ENCODE measurements at regions of chr4 and their contacts with region 1.

Region 1: GRCh38 chr4:164136180-164136616 is 617.7 kb upstream of the SMIM31 start:
- DNase-seq: no peak
- ATAC-seq: no peak
- H3K4me3 ChIP-seq: no peak overlapping the region
- H3K27ac ChIP-seq: no peak overlapping the region
- H3K4me1 ChIP-seq: no peaks in the 10 kb centered on the region
- H3K27me3 ChIP-seq: no peaks in the 10 kb centered on the region
- CTCF ChIP-seq: no peak

Region 2: GRCh38 chr4:163988865-163989264 is 147.3 kb before region 1 on chr4:
- CTCF ChIA-PET with region 1: no interaction called
- POLR2A ChIA-PET with region 1: no interaction called
- intact Hi-C with region 1: no loop called
- DNase-seq: no peak
- ATAC-seq: no peak
- H3K4me3 ChIP-seq: no peak overlapping the region
- H3K27ac ChIP-seq: no peak overlapping the region
- H3K4me1 ChIP-seq: peaks cover 7% of the 10 kb centered on the region
- H3K27me3 ChIP-seq: no peaks in the 10 kb centered on the region
- CTCF ChIP-seq: no peak

Region 3: DNA sequence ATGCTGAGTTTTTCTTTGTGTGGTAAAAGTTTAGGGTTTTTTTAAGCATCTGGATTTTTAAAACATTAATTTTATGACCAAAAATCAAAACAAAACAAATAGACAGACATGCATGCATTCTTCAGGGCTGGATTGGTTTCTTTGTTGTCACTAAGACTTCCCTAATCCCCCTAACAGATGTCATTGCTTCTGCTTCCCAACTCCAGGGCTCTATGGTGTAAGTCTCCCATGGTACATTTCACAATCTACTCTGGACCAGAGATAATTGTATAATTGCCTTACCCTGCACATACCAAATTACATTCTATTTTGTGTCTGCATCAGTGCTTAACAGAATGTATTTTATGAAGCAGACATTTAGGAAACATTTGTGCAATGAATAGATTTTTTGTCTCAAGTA is 88.7 kb after region 1 on chr4:
- CTCF ChIA-PET with region 1: no interaction called
- POLR2A ChIA-PET with region 1: no interaction called
- intact Hi-C with region 1: no loop called
- DNase-seq: no peak
- ATAC-seq: no peak
- H3K4me3 ChIP-seq: no peak overlapping the region
- H3K27ac ChIP-seq: no peak overlapping the region
- H3K4me1 ChIP-seq: no peaks in the 10 kb centered on the region
- H3K27me3 ChIP-seq: no peaks in the 10 kb centered on the region
- CTCF ChIP-seq: no peak

Region 4: DNA sequence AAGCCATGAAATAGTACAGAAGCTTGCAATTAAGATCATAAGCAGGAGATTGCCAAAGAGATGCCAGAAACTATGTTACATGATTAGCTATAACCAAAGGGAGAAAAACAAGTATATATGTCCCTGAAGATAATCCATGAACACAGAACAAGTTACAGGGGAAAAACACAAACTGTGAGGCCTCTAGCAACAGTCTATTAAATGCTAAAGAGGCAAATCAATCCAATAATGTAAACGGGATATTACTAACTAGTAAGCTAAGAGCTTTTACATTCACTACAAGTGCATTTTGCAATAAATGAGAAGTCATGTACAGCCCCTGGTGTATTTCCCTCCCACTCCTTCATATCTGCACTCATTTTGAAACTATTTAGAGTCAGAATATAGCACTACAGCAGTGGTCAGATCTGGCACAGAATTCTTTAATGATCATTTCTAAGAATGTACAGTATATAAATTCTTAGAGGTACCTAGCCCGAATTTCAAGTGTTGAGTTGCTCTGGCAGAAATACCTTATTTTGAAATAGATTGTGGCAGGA is 168.0 kb after region 1 on chr4:
- CTCF ChIA-PET with region 1: no interaction called
- POLR2A ChIA-PET with region 1: no interaction called
- intact Hi-C with region 1: loop called (anchors 10 kb)
- DNase-seq: peak; percentile 23
- ATAC-seq: peak; percentile 31; the same call in 1 of the 2 replicates
- H3K4me3 ChIP-seq: peak overlapping the region; percentile 19; the same call in 1 of the 2 replicates
- H3K27ac ChIP-seq: peak overlapping the region; percentile 89
- H3K4me1 ChIP-seq: peaks cover 23% of the 10 kb centered on the region
- H3K27me3 ChIP-seq: no peaks in the 10 kb centered on the region
- CTCF ChIP-seq: no peak

Region 5: DNA sequence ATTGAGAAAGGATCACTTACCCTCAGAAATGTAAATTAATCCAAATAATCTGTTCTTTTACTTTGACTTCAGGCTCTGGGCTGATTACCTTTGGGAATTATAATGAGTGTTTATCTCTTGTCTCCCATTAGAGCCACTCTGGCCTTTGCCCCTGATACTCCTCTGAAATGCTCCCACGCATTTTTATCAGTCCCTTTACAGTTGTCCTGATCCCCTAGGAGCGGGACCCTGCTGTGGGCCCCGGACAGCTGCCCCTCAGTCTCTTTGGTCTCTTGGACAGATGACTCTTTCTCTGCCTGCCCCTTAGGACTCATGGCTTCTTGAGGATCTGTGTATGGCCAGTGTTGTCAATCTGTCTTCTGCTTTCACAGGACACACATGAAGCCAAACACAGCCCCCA is 916.4 kb after region 1 on chr4:
- CTCF ChIA-PET with region 1: no interaction called
- POLR2A ChIA-PET with region 1: no interaction called
- intact Hi-C with region 1: no loop called
- DNase-seq: no peak
- ATAC-seq: no peak
- H3K4me3 ChIP-seq: no peak overlapping the region
- H3K27ac ChIP-seq: no peak overlapping the region
- H3K4me1 ChIP-seq: no peaks in the 10 kb centered on the region
- H3K27me3 ChIP-seq: no peaks in the 10 kb centered on the region
- CTCF ChIP-seq: no peak